WTC11 (cell line): ENCODE measurements at regions of chr19 and their contacts with region 1.

Region 1: GRCh38 chr19:41775360-41775695 is 20.0 kb downstream of the CEACAM6 start:
- DNase-seq: no peak
- ATAC-seq: no peak
- H3K4me3 Mint-ChIP-seq: no peak overlapping the region
- H3K27ac Mint-ChIP-seq: no peak overlapping the region
- H3K4me1 Mint-ChIP-seq: peaks cover 17% of the 10 kb centered on the region
- H3K27me3 Mint-ChIP-seq: no peaks in the 10 kb centered on the region; the same call in 1 of the 2 replicates
- CTCF ChIP-seq: no peak

Region 2: GRCh38 chr19:41785653-41786052 is 10.3 kb after region 1 on chr19:
- CTCF ChIA-PET with region 1: interaction called, 13 read pairs
- POLR2A ChIA-PET with region 1: no interaction called
- DNase-seq: peak; percentile 73
- ATAC-seq: peak; percentile 95
- H3K4me3 Mint-ChIP-seq: peak overlapping the region; percentile 62
- H3K27ac Mint-ChIP-seq: no peak overlapping the region
- H3K4me1 Mint-ChIP-seq: peaks cover 6% of the 10 kb centered on the region
- H3K27me3 Mint-ChIP-seq: peaks cover 43% of the 10 kb centered on the region
- CTCF ChIP-seq: peak; percentile 76